PC-3 (cell line): ENCODE measurements at regions of chr20 and their contacts with region 1.

Region 1: GRCh38 chr20:44388466-44389023 is 33.0 kb downstream of the HNF4A start:
- DNase-seq: peak; percentile 91
- ATAC-seq: peak; percentile 78
- H3K4me3 ChIP-seq: peak overlapping the region; percentile 45
- H3K27ac ChIP-seq: no peak overlapping the region
- H3K4me1 ChIP-seq: peaks cover 12% of the 10 kb centered on the region
- H3K27me3 ChIP-seq: no peaks in the 10 kb centered on the region
- CTCF ChIP-seq: peak; percentile 97

Region 2: DNA sequence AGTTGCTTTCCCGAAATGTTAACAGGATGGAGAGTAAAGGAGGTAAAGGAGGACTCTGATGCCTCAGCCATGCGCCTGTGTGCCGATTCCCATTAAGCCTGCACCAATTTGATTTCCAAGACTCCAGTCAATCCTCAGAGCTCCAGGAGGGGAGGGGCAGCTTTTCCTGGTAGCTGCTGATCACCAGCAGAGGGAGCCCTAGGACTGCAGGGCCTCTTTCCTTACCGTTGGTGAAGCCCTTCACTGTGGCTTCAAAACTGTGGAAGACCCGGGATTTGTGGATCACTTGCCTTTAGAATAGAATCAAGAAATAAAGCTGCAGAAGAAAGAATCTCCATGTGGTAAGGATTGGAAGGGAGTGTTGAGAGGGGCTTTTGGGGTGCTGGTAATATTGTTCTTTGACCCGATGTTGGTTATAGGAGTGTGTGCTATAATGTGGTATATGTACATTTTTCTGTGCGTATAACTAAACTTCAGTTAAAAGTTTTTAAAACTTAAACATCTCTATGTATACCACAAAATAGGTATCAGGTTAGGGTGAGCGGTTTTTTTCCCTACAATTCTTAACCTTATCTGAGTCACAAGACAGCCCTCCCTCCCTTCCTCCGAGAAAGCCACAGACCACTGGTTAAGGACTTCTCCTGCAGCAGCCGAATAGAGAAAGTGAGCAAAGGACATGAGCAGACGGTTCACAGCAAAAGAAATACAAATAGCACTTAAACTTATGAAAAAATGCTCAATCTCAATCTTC is 171.0 kb before region 1 on chr20:
- CTCF ChIA-PET with region 1: interaction called, 8 read pairs
- POLR2A ChIA-PET with region 1: no interaction called
- intact Hi-C with region 1: loop called (anchors 1 kb)
- DNase-seq: peak; percentile 91
- ATAC-seq: peak; percentile 73
- H3K4me3 ChIP-seq: no peak overlapping the region
- H3K27ac ChIP-seq: no peak overlapping the region
- H3K4me1 ChIP-seq: peaks cover 14% of the 10 kb centered on the region; the same call in 1 of the 2 replicates
- H3K27me3 ChIP-seq: no peaks in the 10 kb centered on the region
- CTCF ChIP-seq: peak; percentile 99

Region 3: DNA sequence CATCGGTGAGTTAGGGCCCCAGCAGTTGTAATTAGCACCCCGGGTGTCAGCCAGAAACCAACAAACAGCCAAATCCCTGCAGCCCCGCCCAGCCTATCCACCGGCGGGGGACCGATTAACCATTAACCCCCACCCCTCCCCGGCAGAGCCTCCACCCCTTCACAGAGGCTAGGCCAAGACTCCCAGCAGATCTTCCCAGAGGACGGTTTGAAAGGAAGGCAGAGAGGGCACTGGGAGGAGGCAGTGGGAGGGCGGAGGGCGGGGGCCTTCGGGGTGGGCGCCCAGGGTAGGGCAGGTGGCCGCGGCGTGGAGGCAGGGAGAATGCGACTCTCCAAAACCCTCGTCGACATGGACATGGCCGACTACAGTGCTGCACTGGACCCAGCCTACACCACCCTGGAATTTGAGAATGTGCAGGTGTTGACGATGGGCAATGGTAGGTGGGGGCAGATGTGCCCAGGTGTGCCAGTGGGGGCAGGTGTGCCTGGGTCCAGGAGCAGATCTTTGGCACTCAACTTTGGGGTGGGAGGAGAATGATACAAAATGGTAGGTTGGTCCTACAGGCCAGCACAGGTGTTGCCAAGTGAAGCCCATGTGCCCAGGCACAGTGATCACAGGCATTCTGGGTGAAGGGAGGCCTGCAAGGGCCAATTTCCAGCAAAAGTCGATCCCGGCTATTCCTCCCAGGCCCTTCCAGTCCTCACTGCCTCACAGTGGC is 12.7 kb after region 1 on chr20:
- CTCF ChIA-PET with region 1: no interaction called
- POLR2A ChIA-PET with region 1: no interaction called
- intact Hi-C with region 1: no loop called
- DNase-seq: no peak
- ATAC-seq: no peak
- H3K4me3 ChIP-seq: no peak overlapping the region
- H3K27ac ChIP-seq: no peak overlapping the region
- H3K4me1 ChIP-seq: peaks cover 12% of the 10 kb centered on the region
- H3K27me3 ChIP-seq: no peaks in the 10 kb centered on the region
- CTCF ChIP-seq: no peak

Region 4: DNA sequence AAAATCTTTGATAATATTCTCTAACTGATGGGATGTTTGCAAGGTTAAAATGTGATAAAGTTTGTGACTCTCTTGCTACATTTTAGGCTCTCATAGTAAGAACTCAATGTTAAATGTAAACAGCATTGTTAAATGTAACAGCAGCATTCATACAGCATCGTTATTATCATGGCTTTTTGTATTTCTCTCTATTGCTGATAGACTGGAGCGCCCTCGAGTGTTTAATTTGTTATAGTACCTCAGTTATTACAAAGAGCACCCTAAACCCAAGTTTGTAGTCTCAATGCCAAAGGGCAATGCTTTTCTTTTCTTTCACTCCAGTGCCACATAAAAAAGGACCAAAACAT is 72.2 kb after region 1 on chr20:
- CTCF ChIA-PET with region 1: interaction called, 4 read pairs
- POLR2A ChIA-PET with region 1: no interaction called
- intact Hi-C with region 1: loop called (anchors 1 kb)
- DNase-seq: peak; percentile 72
- ATAC-seq: peak; percentile 49
- H3K4me3 ChIP-seq: no peak overlapping the region
- H3K27ac ChIP-seq: peak overlapping the region; percentile 32
- H3K4me1 ChIP-seq: peaks cover 19% of the 10 kb centered on the region
- H3K27me3 ChIP-seq: no peaks in the 10 kb centered on the region
- CTCF ChIP-seq: peak; percentile 86

Region 5: GRCh38 chr20:44532259-44532980 is 143.9 kb after region 1 on chr20:
- CTCF ChIA-PET with region 1: no interaction called
- POLR2A ChIA-PET with region 1: no interaction called
- intact Hi-C with region 1: loop called (anchors 2 kb)
- DNase-seq: peak; percentile 25
- ATAC-seq: peak; percentile 14
- H3K4me3 ChIP-seq: peak overlapping the region; percentile 75
- H3K27ac ChIP-seq: peak overlapping the region; percentile 41
- H3K4me1 ChIP-seq: peaks cover 27% of the 10 kb centered on the region
- H3K27me3 ChIP-seq: no peaks in the 10 kb centered on the region
- CTCF ChIP-seq: no peak

Region 6: DNA sequence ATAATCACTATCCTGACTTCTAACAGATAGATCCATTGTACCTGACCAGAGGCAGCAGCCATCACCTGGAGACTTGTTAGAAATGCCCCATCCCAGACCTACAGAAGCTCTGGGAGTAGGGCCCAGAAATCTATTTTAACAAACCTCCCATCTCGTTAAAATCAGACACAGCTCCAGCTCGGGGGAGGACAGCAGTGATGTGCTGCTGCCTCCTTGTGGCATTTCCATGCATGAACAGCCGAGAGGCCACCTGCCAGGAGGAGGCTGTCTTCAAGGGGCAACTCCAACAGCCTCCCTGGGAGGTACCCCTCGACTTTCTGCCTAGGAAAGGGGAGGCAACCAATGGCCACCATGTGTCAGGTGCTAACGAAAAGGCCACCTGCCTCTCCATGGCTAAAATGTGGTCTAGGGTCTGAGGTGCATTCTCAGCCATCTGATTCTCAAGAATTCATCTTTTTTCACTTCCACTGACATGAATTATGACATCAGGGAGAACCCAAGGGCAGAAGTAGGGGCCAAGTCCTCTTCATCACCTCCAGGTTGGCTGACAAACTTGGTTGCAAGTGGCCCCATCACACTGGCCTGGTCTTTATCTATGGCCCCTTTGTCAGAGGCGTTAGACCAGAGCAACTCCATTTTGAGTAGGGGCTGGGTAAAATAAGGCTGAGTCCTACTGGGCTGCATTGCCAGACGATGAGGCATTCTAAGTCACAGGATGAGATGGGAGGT is 345.0 kb after region 1 on chr20:
- CTCF ChIA-PET with region 1: no interaction called
- POLR2A ChIA-PET with region 1: no interaction called
- intact Hi-C with region 1: loop called (anchors 5 kb)
- DNase-seq: peak; percentile 90
- ATAC-seq: peak; percentile 11
- H3K4me3 ChIP-seq: no peak overlapping the region
- H3K27ac ChIP-seq: no peak overlapping the region
- H3K4me1 ChIP-seq: peaks cover 42% of the 10 kb centered on the region
- H3K27me3 ChIP-seq: no peaks in the 10 kb centered on the region
- CTCF ChIP-seq: peak; percentile 96

Region 7: GRCh38 chr20:44848254-44849015 is 459.9 kb after region 1 on chr20:
- CTCF ChIA-PET with region 1: no interaction called
- POLR2A ChIA-PET with region 1: no interaction called
- intact Hi-C with region 1: no loop called
- DNase-seq: peak; percentile 51
- ATAC-seq: peak; percentile 54
- H3K4me3 ChIP-seq: no peak overlapping the region
- H3K27ac ChIP-seq: no peak overlapping the region
- H3K4me1 ChIP-seq: no peaks in the 10 kb centered on the region
- H3K27me3 ChIP-seq: peaks cover 61% of the 10 kb centered on the region
- CTCF ChIP-seq: no peak